Left cardiac atrium (tissue), 4 donors: ENCODE measurements at regions of chr9 and their contacts with region 1.

Region 1: GRCh38 chr9:23394189-23394588 is 431.9 kb downstream of the ELAVL2 start:
- DNase-seq: no peak
- ATAC-seq: no peak

Region 2: DNA sequence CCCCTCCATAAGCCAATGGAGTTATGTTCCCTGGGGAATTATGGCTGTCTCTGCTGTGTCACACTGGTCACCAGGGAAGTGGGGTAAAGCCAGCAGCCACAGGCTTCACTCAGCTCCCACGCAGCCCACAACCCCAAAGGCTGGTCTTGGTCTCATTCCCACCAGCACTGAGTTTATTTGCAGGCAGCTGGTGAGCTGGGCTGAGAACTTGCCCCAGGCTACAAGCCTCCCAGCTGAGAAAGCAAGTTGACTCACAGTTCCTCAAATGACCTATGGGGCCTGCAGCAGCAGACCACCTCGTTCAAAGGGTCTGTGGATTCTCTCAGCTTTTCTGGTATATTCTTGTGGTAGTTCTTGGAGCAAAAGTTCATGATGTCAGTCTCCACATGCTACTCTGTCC is 36.5 kb before region 1 on chr9:
- intact Hi-C with region 1: loop called in 1 of 2 experiments (anchors 5 kb)
- DNase-seq: no peak
- ATAC-seq: no peak